Left cardiac atrium (tissue), 4 donors: ENCODE measurements at regions of chr5 and their contacts with region 1.

Region 1: DNA sequence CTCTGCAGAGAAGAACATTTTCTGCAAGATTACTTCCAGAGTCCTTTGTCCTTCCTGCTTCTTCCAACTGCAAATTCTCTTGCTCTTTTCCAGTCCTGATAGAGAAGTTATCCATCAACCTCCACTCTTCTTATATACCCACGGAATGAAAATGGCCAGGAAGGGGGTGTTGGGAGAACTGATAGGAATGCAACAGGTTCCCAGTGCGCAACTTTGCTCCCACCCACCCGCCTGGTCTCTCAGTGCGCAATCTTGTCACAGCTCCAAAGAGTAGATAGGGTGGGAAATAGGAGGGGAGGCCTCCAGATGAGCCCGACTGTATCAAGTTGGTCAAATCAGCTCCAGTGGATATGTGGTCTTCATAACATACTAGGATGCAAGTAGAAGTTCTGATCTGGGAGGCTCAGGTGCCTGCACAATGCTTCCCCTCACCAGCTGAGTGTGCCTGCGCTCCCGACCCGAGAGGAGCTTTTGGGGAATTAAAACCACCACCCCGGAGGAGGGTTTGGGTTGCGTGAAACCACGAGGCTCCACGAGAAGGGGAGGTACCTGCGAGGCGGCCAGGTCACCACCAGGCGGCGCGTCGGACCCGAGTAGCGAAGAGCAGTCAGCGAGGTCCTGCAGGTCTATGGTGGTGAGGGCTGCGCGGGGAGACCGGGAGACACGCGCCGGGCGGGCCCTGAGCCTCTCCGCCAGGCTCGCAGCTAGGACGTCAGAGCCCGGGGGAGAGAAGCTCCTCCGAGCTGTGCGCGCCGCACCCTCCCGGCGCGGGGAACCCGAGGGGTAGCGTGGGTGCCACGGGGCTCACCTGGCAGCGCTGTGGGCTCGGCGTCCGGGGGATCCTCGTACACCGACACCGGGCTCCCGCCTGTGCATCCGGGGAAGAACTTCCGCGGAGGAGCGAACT is 835 bp downstream of the MCIDAS start:
- DNase-seq: peak; percentile 38
- ATAC-seq: peak; percentile 56 to 75

Region 2: GRCh38 chr5:55159763-55160492 is 66.4 kb before region 1 on chr5 and contains the start of gene GPX8:
- intact Hi-C with region 1: no loop called
- DNase-seq: no peak
- ATAC-seq: peak; percentile 87 to 94
- total RNA-seq, gene GPX8: 14.5 to 21.8 TPM

Region 3: GRCh38 chr5:55172051-55172899 is 54.0 kb before region 1 on chr5:
- intact Hi-C with region 1: loop called (anchors 5 to 10 kb)
- DNase-seq: peak; percentile 35
- ATAC-seq: peak; percentile 75 to 81

Region 4: DNA sequence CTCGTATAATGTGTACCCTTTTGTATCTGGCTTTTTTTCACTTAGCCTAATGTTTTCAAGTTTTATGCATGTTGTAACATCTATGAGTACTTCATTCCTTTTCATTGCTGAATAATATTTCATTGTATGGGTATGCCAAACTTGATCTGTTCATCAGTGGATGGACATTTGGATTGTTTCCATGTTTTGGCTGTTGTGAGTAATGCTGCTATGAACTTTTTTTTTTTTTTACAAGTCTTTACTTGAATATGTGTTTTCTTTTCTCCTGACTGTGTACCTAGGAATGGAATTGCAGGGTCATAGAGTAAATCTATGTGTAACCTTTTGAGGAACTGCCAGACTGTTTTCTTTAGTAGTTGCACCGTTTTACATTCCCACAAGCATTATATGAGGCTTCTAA is 133.9 kb after region 1 on chr5:
- intact Hi-C with region 1: no loop called
- DNase-seq: no peak
- ATAC-seq: no peak